Activated B cell treated with CpG ODN at 0.5 μM for 24 hours (primary cell): ENCODE measurements at regions of chr12 and their contacts with region 1.

Region 1: DNA sequence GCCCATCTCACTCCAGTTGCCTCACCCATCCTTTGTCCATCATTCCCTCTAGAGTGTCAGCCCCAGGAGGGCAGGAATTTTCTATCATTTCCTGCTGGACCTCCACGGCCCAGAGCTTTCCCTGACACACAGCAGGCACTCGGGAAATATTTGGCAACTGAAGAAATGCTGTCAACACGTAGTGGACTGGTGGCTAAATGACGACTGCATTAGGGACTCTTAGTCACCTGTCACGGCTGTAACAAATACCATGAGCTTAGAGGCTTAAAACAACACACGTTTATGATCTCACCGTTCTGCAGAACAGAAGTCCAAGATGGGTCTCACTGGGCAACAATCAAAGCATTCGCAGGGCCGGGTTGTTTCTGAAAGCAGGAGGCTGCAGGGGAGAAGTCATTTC is 91.3 kb downstream of the PHETA1 start:
- DNase-seq: no peak
- ATAC-seq: no peak
- H3K4me3 Mint-ChIP-seq: no peak overlapping the region
- H3K27ac Mint-ChIP-seq: no peak overlapping the region
- H3K4me1 Mint-ChIP-seq: no peaks in the 10 kb centered on the region
- H3K27me3 Mint-ChIP-seq: peaks cover 34% of the 10 kb centered on the region
- CTCF ChIP-seq: no peak

Region 2: GRCh38 chr12:111693818-111694217 is 416.2 kb after region 1 on chr12:
- CTCF ChIA-PET with region 1: no interaction called
- POLR2A ChIA-PET with region 1: interaction called, 13 read pairs
- intact Hi-C with region 1: no loop called
- DNase-seq: no peak
- ATAC-seq: no peak
- H3K4me3 Mint-ChIP-seq: no peak overlapping the region
- H3K27ac Mint-ChIP-seq: no peak overlapping the region
- H3K4me1 Mint-ChIP-seq: no peaks in the 10 kb centered on the region
- H3K27me3 Mint-ChIP-seq: no peaks in the 10 kb centered on the region
- CTCF ChIP-seq: no peak